ENCODE measurements at regions of chr6 and their contacts with region 1.

Region 1: GRCh38 chr6:35461244-35461643 is 7.0 kb upstream of the RPL10A start:
- DNase-seq: no peak
- ATAC-seq: no peak
- H3K4me3 ChIP-seq: no peak overlapping the region
- H3K27ac ChIP-seq: no peak overlapping the region
- H3K4me1 ChIP-seq: no peaks in the 10 kb centered on the region
- H3K27me3 ChIP-seq: no peaks in the 10 kb centered on the region
- CTCF ChIP-seq: no peak
- POLR2A ChIP-seq: no peak

Region 2: GRCh38 chr6:34223956-34224940 is 1237.0 kb before region 1 on chr6:
- intact Hi-C with region 1: no loop called
- DNase-seq: peak; percentile 93 to 96 (median 96)
- ATAC-seq: peak; percentile 99
- H3K4me3 ChIP-seq: peak overlapping the region in 1 of 2 donors; percentile 54
- H3K27ac ChIP-seq: peak overlapping the region; percentile 89 to 100 (median 95)
- H3K4me1 ChIP-seq: peaks cover 12% of the 10 kb centered on the region
- H3K27me3 ChIP-seq: no peaks in the 10 kb centered on the region
- CTCF ChIP-seq: no peak
- POLR2A ChIP-seq: peak; percentile 68 to 82 (median 81)

Region 3: GRCh38 chr6:35283361-35283760 is 177.9 kb before region 1 on chr6:
- intact Hi-C with region 1: no loop called
- DNase-seq: no peak
- ATAC-seq: no peak
- H3K4me3 ChIP-seq: no peak overlapping the region
- H3K27ac ChIP-seq: no peak overlapping the region
- H3K4me1 ChIP-seq: no peaks in the 10 kb centered on the region
- H3K27me3 ChIP-seq: no peaks in the 10 kb centered on the region
- CTCF ChIP-seq: no peak
- POLR2A ChIP-seq: no peak

Region 4: GRCh38 chr6:35297601-35298481 is 163.4 kb before region 1 on chr6 and contains the start of gene DEF6:
- intact Hi-C with region 1: loop called (anchors 5 kb)
- DNase-seq: peak; percentile 87 to 93 (median 91)
- ATAC-seq: peak; percentile 96
- H3K4me3 ChIP-seq: peak within 1 kb of the TSS; percentile 21 to 71
- H3K27ac ChIP-seq: peak within 1 kb of the TSS; percentile 32 to 76 (median 59)
- H3K4me1 ChIP-seq: peaks cover 35% of the 10 kb centered on the region
- H3K27me3 ChIP-seq: no peaks in the 10 kb centered on the region
- CTCF ChIP-seq: peak; percentile 53 to 98 (median 94)
- POLR2A ChIP-seq: peak; percentile 71 to 90 (median 84)
- total RNA-seq, gene DEF6: 10.2 to 23.3 TPM